ENCODE measurements at regions of chr5 and their contacts with region 1.

Region 1: DNA sequence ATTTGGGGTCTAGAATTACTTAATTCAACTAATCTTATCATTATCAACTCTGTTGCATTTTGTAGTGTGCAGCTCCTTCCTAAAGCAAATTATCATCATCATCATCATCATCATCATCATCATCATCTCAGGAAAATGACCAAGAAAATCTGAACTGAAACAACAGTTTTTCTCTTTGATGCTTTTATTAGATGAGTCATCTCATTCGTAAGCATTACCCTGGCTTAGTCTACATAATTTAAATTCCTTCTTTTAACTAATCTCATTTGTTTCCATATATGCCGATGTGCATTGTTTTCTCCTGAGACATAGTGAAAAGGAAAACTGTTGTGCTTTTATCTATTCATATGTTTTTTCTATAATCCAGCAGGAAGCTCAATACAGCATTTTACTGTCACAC is 173.0 kb upstream of the PDE4D start:
- DNase-seq: no peak

Region 2: GRCh38 chr5:59917121-59917520 is 149.4 kb before region 1 on chr5:
- intact Hi-C with region 1: no loop called
- DNase-seq: no peak

Region 3: GRCh38 chr5:60077292-60077691 is 10.8 kb after region 1 on chr5:
- intact Hi-C with region 1: loop called in 1 of 2 experiments (anchors 1 kb)
- DNase-seq: peak; percentile 38

Region 4: DNA sequence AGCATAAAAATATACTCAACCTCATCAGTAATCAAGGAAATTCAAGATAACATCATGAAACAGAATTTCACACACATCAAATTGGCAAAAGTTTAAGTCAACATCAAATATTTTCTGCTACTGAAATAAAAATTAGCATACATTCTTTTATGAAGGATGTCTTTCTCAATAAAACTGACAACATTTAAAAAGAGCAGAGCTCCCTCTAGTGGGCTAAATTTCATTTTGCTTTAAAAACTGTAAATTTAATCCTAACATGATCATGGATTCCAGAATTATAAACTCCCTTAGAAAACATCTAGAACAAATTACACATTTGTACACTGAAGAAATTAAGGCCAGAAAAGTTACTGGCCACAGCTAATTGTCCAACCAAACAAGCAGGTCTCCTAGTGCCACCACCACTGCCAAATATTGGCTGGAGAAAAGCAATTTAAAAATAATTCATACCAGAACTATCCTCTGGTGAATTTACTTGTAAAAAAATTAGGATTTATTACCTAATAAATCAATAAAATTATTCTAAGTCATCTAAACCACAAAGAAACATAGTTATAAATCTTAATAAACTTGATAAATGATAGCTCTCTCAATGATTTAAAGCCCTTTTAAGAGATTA is 602.3 kb after region 1 on chr5:
- intact Hi-C with region 1: loop called in 1 of 2 experiments (anchors 10 kb)
- DNase-seq: no peak

Measured in posterior vena cava (tissue), 2 donors.